ENCODE measurements at regions of chr7 and their contacts with region 1.

Region 1: DNA sequence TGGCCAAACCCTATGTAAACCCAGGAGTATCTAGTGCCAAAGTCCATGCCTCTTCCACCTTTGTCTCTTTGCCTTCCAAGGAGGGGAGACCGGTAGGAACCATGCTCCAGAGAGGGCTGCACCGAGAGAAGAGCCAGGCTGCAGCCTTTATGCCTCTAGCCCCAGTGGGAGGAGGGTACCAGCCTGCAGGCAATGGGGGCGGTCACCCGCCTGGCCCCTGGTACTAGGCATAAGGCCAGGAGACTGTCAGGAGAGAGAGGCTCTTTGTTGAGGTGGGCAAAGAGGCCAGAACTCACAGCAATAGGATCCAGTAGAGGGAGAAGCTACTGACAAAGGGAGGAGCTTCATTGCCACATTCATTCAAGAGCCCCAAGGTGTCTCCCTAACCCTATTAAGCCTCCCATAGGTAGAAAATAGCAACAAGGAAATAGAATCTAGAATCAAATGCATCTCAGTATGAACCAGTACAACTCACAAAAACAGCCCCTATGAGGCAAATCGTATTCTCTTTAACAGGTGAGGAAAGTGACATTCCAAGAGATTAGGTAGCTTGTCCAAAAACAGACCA is 146.6 kb upstream of the PDE1C start:
- DNase-seq: no peak
- ATAC-seq: no peak
- H3K4me3 ChIP-seq: no peak overlapping the region
- H3K27ac ChIP-seq: no peak overlapping the region
- H3K4me1 ChIP-seq: no peaks in the 10 kb centered on the region
- CTCF ChIP-seq: no peak
- EP300 ChIP-seq: no peak
- POLR2A ChIP-seq: no peak
- RAD21 ChIP-seq: no peak

Region 2: DNA sequence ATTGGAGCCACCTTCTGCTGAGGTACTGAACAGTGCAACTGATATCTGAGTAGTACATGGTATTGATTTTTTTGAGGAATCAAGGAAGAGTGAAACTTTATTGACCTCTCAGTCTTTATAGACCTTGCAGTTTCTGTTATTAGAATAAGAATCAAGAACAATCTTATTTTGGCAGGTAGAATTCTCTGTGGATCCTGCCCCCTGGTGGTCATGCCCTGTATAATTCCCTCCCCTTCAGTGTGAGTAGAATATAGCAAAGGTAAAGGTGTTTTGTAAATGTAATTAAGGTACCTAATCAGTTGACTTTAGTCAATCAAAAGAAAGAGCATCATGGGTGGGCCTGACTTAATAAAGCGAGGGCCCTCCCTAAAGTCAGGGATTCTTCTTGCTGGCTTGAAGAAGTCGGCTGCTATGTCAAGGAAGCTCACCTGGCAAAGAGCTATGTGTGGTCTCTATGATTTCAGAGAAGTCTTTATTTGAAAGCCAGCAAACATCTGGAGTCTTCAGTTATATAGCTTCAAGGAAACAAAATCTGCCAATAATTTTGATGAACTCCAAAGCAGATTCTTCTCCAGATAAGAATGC is 130.5 kb after region 1 on chr7:
- CTCF ChIA-PET with region 1: interaction called, 22 read pairs
- POLR2A ChIA-PET with region 1: no interaction called
- DNase-seq: peak; percentile 15 to 19
- ATAC-seq: 0 out of 6 replicates have a peak, but pooled peaks of 1 of the 2 experiments have one; percentile 40
- H3K4me3 ChIP-seq: no peak overlapping the region
- H3K27ac ChIP-seq: no peak overlapping the region
- H3K4me1 ChIP-seq: no peaks in the 10 kb centered on the region
- CTCF ChIP-seq: peak; percentile 68
- EP300 ChIP-seq: no peak
- POLR2A ChIP-seq: no peak
- RAD21 ChIP-seq: peak; percentile 34 to 50; a peak in 3 of 5 replicates